PC-3 (cell line): ENCODE measurements at regions of chr12 and their contacts with region 1.

Region 1: GRCh38 chr12:101323255-101323654 is 43.4 kb downstream of the UTP20 start:
- DNase-seq: peak; percentile 9
- ATAC-seq: no peak
- H3K4me3 ChIP-seq: no peak overlapping the region
- H3K27ac ChIP-seq: no peak overlapping the region
- H3K4me1 ChIP-seq: no peaks in the 10 kb centered on the region
- H3K27me3 ChIP-seq: no peaks in the 10 kb centered on the region
- CTCF ChIP-seq: no peak

Region 2: GRCh38 chr12:100827901-100828520 is 495.2 kb before region 1 on chr12:
- CTCF ChIA-PET with region 1: no interaction called
- POLR2A ChIA-PET with region 1: no interaction called
- intact Hi-C with region 1: loop called (anchors 2 kb)
- DNase-seq: peak; percentile 63
- ATAC-seq: no peak
- H3K4me3 ChIP-seq: no peak overlapping the region
- H3K27ac ChIP-seq: no peak overlapping the region
- H3K4me1 ChIP-seq: no peaks in the 10 kb centered on the region
- H3K27me3 ChIP-seq: no peaks in the 10 kb centered on the region
- CTCF ChIP-seq: peak; percentile 75

Region 3: DNA sequence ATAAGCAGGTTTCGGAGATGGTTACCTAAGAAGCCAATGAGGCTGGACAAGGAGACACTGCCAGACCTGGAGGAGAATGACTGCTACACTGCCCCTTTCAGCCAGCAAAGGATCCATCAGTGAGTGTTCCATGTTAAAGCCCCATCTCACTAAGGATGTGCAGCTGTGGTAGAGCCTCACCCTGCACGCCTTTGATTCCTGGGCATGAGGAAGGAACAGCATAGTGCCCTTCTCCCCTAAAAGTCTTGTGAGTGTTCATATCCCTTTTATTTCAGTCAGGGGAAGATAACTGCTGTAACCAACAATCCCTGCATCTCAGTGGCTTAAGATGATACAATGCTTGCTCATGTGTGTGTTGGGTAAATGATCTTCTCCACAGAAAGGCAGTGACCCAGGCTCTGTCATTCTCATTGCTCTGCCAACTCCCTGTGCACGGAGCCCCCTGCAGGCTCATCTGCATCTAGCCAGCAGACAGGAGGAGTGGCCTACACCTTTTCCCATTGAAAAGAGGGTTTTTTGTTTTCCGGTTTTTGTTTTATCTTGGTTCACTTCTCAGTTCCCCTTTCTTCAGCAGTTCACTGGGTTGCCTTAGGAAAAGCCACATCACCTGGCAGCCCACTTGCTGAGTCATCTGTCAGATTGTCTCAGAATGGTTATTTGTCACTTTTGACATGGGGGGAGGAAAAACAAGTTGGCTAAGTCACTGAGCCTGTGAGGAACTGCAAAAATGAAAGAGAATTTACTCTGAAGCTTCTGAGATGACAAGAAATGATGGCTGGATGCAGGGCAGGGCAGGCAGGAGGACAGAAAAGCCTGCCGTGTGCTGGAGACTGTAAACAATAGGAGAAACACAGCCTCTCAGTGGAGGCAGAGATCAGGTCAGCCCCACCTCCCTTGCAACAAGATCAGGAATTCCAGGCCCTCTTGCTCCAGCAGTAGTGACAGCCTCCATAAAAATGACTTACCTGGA is 335.4 kb before region 1 on chr12:
- CTCF ChIA-PET with region 1: no interaction called
- POLR2A ChIA-PET with region 1: no interaction called
- intact Hi-C with region 1: no loop called
- DNase-seq: peak; percentile 66
- ATAC-seq: no peak
- H3K4me3 ChIP-seq: no peak overlapping the region
- H3K27ac ChIP-seq: no peak overlapping the region
- H3K4me1 ChIP-seq: no peaks in the 10 kb centered on the region
- H3K27me3 ChIP-seq: no peaks in the 10 kb centered on the region
- CTCF ChIP-seq: peak; percentile 55

Region 4: GRCh38 chr12:101165319-101165718 is 157.9 kb before region 1 on chr12:
- CTCF ChIA-PET with region 1: no interaction called
- POLR2A ChIA-PET with region 1: no interaction called
- intact Hi-C with region 1: no loop called
- DNase-seq: no peak
- ATAC-seq: no peak
- H3K4me3 ChIP-seq: no peak overlapping the region
- H3K27ac ChIP-seq: no peak overlapping the region
- H3K4me1 ChIP-seq: no peaks in the 10 kb centered on the region
- H3K27me3 ChIP-seq: peaks cover 24% of the 10 kb centered on the region
- CTCF ChIP-seq: no peak

Region 5: GRCh38 chr12:101379149-101379548 is 55.9 kb after region 1 on chr12:
- CTCF ChIA-PET with region 1: no interaction called
- POLR2A ChIA-PET with region 1: no interaction called
- intact Hi-C with region 1: no loop called
- DNase-seq: no peak
- ATAC-seq: no peak
- H3K4me3 ChIP-seq: no peak overlapping the region
- H3K27ac ChIP-seq: no peak overlapping the region
- H3K4me1 ChIP-seq: no peaks in the 10 kb centered on the region
- H3K27me3 ChIP-seq: no peaks in the 10 kb centered on the region
- CTCF ChIP-seq: no peak